ENCODE measurements at regions of chrX and their contacts with region 1.

Region 1: DNA sequence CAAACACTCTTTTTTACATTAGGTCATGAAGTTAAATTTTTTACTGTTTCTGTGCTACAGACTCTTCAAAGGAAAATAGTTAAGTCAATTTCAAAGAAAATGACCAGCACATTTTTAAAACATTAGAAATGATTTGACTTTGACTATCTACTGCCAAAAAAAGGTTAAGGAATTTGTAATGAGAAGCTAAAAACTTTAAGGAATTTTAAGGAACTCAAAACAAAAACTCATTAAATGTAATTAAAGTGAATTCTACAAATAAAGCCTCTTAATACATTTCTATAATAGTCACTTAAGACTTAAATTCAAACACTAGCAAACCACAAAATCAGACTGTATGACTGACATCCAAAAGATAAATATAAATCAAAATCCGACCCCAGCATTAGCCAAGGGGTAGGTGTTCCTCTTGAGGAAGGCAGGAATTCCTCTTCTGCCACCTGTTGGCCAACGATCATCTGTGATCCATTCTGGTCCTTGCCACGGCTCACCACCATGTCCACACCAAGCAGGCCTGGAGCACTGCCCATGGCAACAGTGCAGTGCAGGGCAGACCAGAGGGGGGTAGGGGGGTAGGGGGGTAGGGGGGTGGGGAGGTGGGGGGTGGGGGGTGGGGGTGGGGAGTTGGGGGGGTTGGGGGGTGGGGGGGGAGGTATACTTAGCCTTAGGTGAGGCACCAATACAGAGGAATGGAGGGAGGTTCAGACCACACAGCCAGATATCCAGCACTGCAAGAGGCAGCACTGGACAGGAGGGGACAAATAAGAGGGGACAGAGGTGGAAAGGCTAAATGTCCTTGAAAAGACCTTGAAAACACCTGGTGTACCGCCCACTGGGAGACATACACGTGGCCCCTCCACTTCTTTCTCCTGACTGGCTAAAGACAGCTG is 287.4 kb downstream of the CHIC1 start:
- DNase-seq: peak in 1 of 2 experiments; percentile 8
- H3K4me3 ChIP-seq: no peak overlapping the region
- H3K4me3 Mint-ChIP-seq: no peak overlapping the region
- H3K27ac Mint-ChIP-seq: no peak overlapping the region
- H3K4me1 ChIP-seq: no peaks in the 10 kb centered on the region
- H3K4me1 Mint-ChIP-seq: no peaks in the 10 kb centered on the region
- H3K27me3 ChIP-seq: no peaks in the 10 kb centered on the region
- H3K27me3 Mint-ChIP-seq: no peaks in the 10 kb centered on the region
- CTCF ChIP-seq: peak in 1 of 2 experiments; percentile 18

Region 2: GRCh38 chrX:73401591-73402266 is 448.6 kb before region 1 on chrX:
- CTCF ChIA-PET with region 1: no interaction called
- POLR2A ChIA-PET with region 1: no interaction called
- intact Hi-C with region 1: loop called (anchors 5 kb)
- DNase-seq: peak; percentile 1 to 26
- H3K4me3 ChIP-seq: no peak overlapping the region
- H3K4me3 Mint-ChIP-seq: no peak overlapping the region
- H3K27ac Mint-ChIP-seq: no peak overlapping the region
- H3K4me1 ChIP-seq: no peaks in the 10 kb centered on the region
- H3K4me1 Mint-ChIP-seq: no peaks in the 10 kb centered on the region
- H3K27me3 ChIP-seq: no peaks in the 10 kb centered on the region
- H3K27me3 Mint-ChIP-seq: peaks cover 6% of the 10 kb centered on the region
- CTCF ChIP-seq: peak in 1 of 2 experiments; percentile 6

Measured in Caco-2 (cell line).